ENCODE measurements at regions of chr3 and their contacts with region 1.

Region 1: GRCh38 chr3:42961633-42962032 is 17.5 kb upstream of the GASK1A start:
- DNase-seq: peak in 1 of 2 experiments; percentile 48
- H3K4me3 ChIP-seq: no peak overlapping the region
- H3K4me3 Mint-ChIP-seq: no peak overlapping the region
- H3K27ac Mint-ChIP-seq: no peak overlapping the region
- H3K4me1 ChIP-seq: no peaks in the 10 kb centered on the region
- H3K4me1 Mint-ChIP-seq: no peaks in the 10 kb centered on the region
- H3K27me3 ChIP-seq: no peaks in the 10 kb centered on the region
- H3K27me3 Mint-ChIP-seq: peaks cover 7% of the 10 kb centered on the region
- CTCF ChIP-seq: peak; percentile 48 to 49

Region 2: GRCh38 chr3:43024181-43024885 is 62.7 kb after region 1 on chr3:
- CTCF ChIA-PET with region 1: no interaction called
- POLR2A ChIA-PET with region 1: no interaction called
- intact Hi-C with region 1: no loop called
- DNase-seq: no peak
- H3K4me3 ChIP-seq: no peak overlapping the region
- H3K4me3 Mint-ChIP-seq: no peak overlapping the region
- H3K27ac Mint-ChIP-seq: no peak overlapping the region
- H3K4me1 ChIP-seq: peaks cover 8% of the 10 kb centered on the region
- H3K4me1 Mint-ChIP-seq: peaks cover 6% of the 10 kb centered on the region
- H3K27me3 ChIP-seq: no peaks in the 10 kb centered on the region
- H3K27me3 Mint-ChIP-seq: no peaks in the 10 kb centered on the region
- CTCF ChIP-seq: no peak

Region 3: GRCh38 chr3:43087249-43087776 is 125.7 kb after region 1 on chr3:
- CTCF ChIA-PET with region 1: interaction called, 7 read pairs
- POLR2A ChIA-PET with region 1: no interaction called
- intact Hi-C with region 1: loop called (anchors 5 kb)
- DNase-seq: no peak
- H3K4me3 ChIP-seq: no peak overlapping the region
- H3K4me3 Mint-ChIP-seq: no peak overlapping the region
- H3K27ac Mint-ChIP-seq: no peak overlapping the region
- H3K4me1 ChIP-seq: 0 out of 2 replicates have a peak, but pooled peaks cover 4% of the 10 kb centered on the region
- H3K4me1 Mint-ChIP-seq: peaks cover 6% of the 10 kb centered on the region
- H3K27me3 ChIP-seq: no peaks in the 10 kb centered on the region
- H3K27me3 Mint-ChIP-seq: no peaks in the 10 kb centered on the region
- CTCF ChIP-seq: peak in 1 of 2 experiments; percentile 17

Region 4: GRCh38 chr3:43106293-43106628 is 144.6 kb after region 1 on chr3:
- CTCF ChIA-PET with region 1: no interaction called
- POLR2A ChIA-PET with region 1: no interaction called
- intact Hi-C with region 1: no loop called
- DNase-seq: no peak
- H3K4me3 ChIP-seq: peak overlapping the region; percentile 27
- H3K4me3 Mint-ChIP-seq: peak overlapping the region; percentile 72
- H3K27ac Mint-ChIP-seq: no peak overlapping the region
- H3K4me1 ChIP-seq: 0 out of 2 replicates have a peak, but pooled peaks cover 4% of the 10 kb centered on the region
- H3K4me1 Mint-ChIP-seq: no peaks in the 10 kb centered on the region
- H3K27me3 ChIP-seq: no peaks in the 10 kb centered on the region
- H3K27me3 Mint-ChIP-seq: peaks cover 5% of the 10 kb centered on the region
- CTCF ChIP-seq: no peak

Region 5: DNA sequence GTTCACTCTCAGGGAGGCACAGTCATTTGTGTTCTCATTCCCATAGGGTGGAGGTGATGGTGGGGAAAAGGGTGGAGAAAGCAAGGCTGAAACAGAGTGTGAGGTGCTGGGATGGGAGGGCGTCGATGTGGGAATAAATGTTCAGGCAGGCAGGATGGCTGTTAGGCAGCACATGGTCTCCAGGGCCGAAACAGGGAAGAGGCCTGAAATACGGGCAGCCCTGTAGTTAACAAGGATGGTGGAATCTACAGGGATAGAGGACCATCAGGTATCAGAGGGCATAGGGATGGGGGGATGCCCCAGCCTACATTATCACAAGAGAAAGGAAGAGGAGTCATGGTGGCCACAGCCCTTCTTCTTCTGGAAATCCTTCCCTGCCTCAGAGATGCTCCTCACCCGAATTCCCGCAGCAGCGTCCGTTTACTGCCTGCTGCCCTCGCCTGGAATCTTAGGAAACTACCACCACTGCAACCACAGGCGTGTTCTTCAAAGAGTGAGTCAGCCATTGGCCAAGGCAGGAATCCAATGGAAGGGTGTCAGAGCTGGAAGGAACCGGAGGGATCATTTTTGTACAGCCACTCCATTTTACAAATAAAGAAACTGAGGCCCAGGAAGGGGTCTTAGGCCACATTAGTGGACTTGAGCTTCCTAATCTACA is 194.0 kb after region 1 on chr3:
- CTCF ChIA-PET with region 1: interaction called, 5 read pairs
- POLR2A ChIA-PET with region 1: no interaction called
- intact Hi-C with region 1: loop called (anchors 1 kb)
- DNase-seq: peak; percentile 66 to 67
- H3K4me3 ChIP-seq: no peak overlapping the region
- H3K4me3 Mint-ChIP-seq: no peak overlapping the region
- H3K27ac Mint-ChIP-seq: no peak overlapping the region
- H3K4me1 ChIP-seq: no peaks in the 10 kb centered on the region
- H3K4me1 Mint-ChIP-seq: no peaks in the 10 kb centered on the region
- H3K27me3 ChIP-seq: no peaks in the 10 kb centered on the region
- H3K27me3 Mint-ChIP-seq: peaks cover 10% of the 10 kb centered on the region
- CTCF ChIP-seq: peak; percentile 54 to 67

Region 6: DNA sequence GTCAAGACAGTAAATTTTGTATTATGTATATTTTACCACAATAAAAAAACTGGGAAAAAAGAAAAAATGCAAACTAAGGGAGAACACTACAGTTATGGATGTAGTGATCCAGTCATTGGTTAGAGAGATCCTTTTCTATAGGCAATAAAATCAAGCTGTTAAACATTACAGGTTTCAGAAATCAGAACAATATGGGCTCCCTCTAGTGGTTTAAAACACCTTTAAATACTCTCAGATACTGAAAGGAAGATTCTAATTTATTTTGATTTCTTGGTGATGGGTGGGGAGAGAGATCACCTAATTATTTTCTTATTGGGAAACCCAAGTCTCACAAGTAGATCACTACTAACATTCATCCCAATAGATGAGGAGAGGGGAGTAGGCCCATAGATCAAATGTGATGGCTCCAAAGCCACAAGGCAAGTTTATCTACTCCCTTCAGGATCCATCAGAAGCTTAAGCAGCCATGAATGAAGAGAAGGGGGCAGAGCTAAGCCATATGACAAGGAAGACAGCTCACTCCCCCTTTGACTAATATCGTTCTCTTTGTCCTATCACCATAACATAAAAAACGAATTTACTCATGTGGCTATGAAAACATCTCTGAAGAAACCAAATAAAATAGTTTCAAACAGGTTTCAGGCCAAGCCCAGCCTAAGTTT is 541.6 kb after region 1 on chr3:
- CTCF ChIA-PET with region 1: interaction called, 5 read pairs
- POLR2A ChIA-PET with region 1: no interaction called
- intact Hi-C with region 1: loop called (anchors 1 kb)
- DNase-seq: no peak
- H3K4me3 ChIP-seq: no peak overlapping the region
- H3K4me3 Mint-ChIP-seq: no peak overlapping the region
- H3K27ac Mint-ChIP-seq: no peak overlapping the region
- H3K4me1 ChIP-seq: no peaks in the 10 kb centered on the region
- H3K4me1 Mint-ChIP-seq: no peaks in the 10 kb centered on the region
- H3K27me3 ChIP-seq: no peaks in the 10 kb centered on the region
- H3K27me3 Mint-ChIP-seq: no peaks in the 10 kb centered on the region
- CTCF ChIP-seq: peak in 1 of 2 experiments; percentile 49

Region 7: GRCh38 chr3:44510000-44510368 is 1548.4 kb after region 1 on chr3:
- CTCF ChIA-PET with region 1: no interaction called
- POLR2A ChIA-PET with region 1: no interaction called
- intact Hi-C with region 1: loop called (anchors 5 kb)
- DNase-seq: no peak
- H3K4me3 ChIP-seq: peak overlapping the region; percentile 56
- H3K4me3 Mint-ChIP-seq: peak overlapping the region; percentile 94
- H3K27ac Mint-ChIP-seq: peak overlapping the region; percentile 95
- H3K4me1 ChIP-seq: peaks cover 11% of the 10 kb centered on the region
- H3K4me1 Mint-ChIP-seq: peaks cover 6% of the 10 kb centered on the region
- H3K27me3 ChIP-seq: no peaks in the 10 kb centered on the region
- H3K27me3 Mint-ChIP-seq: no peaks in the 10 kb centered on the region
- CTCF ChIP-seq: no peak

Measured in Caco-2 (cell line).